OCI-LY7 (cell line): ENCODE measurements at regions of chr11 and their contacts with region 1.

Region 1: GRCh38 chr11:114262681-114263512 is 33.3 kb upstream of the NNMT start:
- DNase-seq: peak; percentile 50
- H3K4me3 ChIP-seq: no peak overlapping the region
- H3K27ac ChIP-seq: no peak overlapping the region
- H3K4me1 ChIP-seq: peaks cover 10% of the 10 kb centered on the region
- CTCF ChIP-seq: peak; percentile 75

Region 2: DNA sequence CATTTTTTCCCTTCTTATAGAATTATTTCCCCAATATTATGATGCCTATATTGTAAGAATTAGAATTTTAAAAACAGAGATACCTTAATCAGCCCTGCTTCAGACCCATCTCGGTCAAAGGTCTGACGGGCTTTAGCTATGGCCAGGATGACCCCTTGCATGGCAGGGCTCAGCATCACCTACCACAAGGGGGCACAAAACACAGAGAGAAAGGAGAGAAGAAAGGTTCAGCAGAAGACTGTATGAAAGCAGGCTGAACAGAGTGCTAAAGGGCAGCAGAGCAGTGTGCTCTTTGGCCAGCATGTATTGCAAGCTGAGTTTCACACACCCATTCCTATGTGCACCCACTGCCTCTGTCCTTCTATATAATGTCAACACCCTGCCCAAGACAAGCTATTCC is 456.5 kb before region 1 on chr11:
- CTCF ChIA-PET with region 1: no interaction called
- POLR2A ChIA-PET with region 1: no interaction called
- intact Hi-C with region 1: loop called (anchors 5 kb)
- DNase-seq: peak; percentile 46
- H3K4me3 ChIP-seq: no peak overlapping the region
- H3K27ac ChIP-seq: no peak overlapping the region
- H3K4me1 ChIP-seq: no peaks in the 10 kb centered on the region
- CTCF ChIP-seq: peak; percentile 77

Region 3: DNA sequence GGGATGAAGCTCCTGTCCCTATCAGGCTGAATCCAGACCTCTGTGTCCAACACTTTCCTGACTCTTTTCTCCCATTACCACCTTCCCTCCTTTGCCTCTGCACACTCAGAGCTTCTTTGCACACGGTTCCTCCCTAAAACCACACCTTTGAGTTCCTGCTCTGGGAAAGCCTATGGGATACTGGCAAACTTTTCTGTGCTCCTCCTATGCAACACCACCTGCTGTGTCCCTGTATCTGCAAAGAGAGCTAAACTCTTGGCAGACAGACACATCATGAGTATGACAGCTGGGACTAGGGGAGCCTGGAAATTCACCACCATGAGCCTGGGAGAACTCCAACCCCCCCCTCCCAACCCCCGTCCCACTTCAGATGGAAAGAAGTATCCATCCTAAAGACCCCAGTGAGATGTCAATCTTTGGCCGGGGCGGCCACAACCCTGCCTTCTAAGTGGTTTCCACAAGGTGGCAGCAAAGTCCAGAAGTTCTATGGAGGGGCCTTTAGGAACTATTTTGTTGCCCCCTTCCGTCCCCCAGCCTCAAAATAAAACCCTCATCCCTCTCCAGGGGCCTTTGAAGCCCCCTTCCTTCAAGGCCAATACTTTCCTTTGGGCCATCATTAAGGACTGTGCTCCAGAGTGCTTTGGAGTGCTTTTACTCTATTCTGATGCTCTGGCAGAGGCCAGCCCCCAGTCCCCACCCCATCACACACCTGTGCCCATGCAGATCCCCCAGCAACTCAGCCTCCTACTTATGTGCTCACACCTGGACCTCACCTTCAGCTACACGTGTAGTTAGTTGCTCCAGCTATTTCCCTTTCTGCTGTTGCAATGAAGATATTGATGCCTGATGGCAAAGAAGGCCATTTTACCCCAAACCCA is 268.6 kb before region 1 on chr11:
- CTCF ChIA-PET with region 1: interaction called, 4 read pairs
- POLR2A ChIA-PET with region 1: interaction called, 4 read pairs
- intact Hi-C with region 1: loop called (anchors 1 kb)
- DNase-seq: peak; percentile 36
- H3K4me3 ChIP-seq: no peak overlapping the region
- H3K27ac ChIP-seq: no peak overlapping the region
- H3K4me1 ChIP-seq: no peaks in the 10 kb centered on the region
- CTCF ChIP-seq: peak; percentile 87

Region 4: DNA sequence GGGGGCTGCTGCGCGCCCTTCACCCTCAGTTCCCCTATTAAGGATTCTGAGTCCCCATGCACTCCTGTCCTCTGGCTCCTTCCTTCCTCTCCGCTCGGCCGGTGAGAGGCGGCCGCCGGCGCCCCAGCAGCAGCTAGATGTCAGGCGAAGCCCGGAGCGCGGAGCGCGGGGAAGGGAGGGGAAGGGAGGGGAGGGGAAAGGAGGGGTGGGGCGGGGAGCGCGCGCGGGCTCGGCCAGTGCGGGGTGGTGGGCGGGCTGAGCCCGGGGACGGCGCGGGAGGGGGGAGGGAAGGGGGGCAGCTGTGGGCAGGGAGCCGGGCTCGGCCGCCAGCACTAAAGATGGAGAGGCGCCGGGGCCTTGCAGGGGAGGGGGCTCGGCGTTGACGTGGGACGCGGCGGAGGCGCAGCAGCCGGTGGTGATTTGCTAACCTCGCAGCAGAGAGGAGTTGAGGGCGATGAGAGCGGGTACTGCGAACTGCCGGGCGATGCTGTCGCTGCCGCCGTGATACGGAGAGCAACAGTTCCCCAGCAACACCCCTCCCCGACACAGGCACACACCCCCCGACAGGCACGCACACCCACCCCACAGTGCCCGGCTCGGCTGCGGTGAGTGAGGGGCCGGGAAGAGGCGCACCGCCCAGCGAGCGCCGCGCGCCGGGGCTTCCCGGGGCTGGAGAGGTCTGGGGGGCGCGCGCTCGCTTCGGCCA is 203.5 kb before region 1 on chr11 and contains the start of gene ZBTB16:
- CTCF ChIA-PET with region 1: no interaction called
- POLR2A ChIA-PET with region 1: no interaction called
- intact Hi-C with region 1: no loop called
- DNase-seq: no peak
- H3K4me3 ChIP-seq: no peak within 1 kb of the TSS
- H3K27ac ChIP-seq: no peak within 1 kb of the TSS
- H3K4me1 ChIP-seq: no peaks in the 10 kb centered on the region
- CTCF ChIP-seq: no peak
- total RNA-seq, gene ZBTB16: 0.03 TPM in 1 of 2 replicates, not detected in the other

Region 5: GRCh38 chr11:114159802-114160632 is 102.9 kb before region 1 on chr11:
- CTCF ChIA-PET with region 1: no interaction called
- POLR2A ChIA-PET with region 1: interaction called, 6 read pairs
- intact Hi-C with region 1: loop called (anchors 2 kb)
- DNase-seq: peak; percentile 98
- H3K4me3 ChIP-seq: peak overlapping the region; percentile 43
- H3K27ac ChIP-seq: peak overlapping the region; percentile 81
- H3K4me1 ChIP-seq: peaks cover 59% of the 10 kb centered on the region
- CTCF ChIP-seq: peak; percentile 48; the same call in 1 of the 2 replicates

Region 6: GRCh38 chr11:114297806-114298700 is 35.2 kb after region 1 on chr11:
- CTCF ChIA-PET with region 1: no interaction called
- POLR2A ChIA-PET with region 1: no interaction called
- intact Hi-C with region 1: no loop called
- DNase-seq: no peak
- H3K4me3 ChIP-seq: no peak overlapping the region
- H3K27ac ChIP-seq: no peak overlapping the region
- H3K4me1 ChIP-seq: no peaks in the 10 kb centered on the region
- CTCF ChIP-seq: no peak

Region 7: DNA sequence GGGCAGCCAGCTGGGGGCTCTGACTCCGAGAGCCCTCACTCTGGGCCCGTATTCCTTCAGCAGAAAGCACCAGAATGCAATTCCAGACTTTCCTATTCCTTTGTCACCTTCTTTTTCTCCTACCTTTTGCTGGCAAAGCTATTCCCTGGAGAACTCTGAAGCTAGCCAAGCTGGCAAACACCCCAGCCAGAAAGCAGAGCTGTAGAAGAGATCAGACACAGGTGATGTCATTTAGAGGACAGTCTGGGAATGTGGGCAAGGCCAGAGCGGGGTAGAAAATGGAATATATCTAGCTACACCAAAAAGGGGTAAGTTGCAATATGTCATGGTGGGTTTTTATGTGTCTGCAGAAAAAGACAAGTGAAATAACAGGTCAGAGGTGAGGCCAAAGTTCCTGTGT is 620.6 kb after region 1 on chr11:
- CTCF ChIA-PET with region 1: no interaction called
- POLR2A ChIA-PET with region 1: no interaction called
- intact Hi-C with region 1: no loop called
- DNase-seq: no peak
- H3K4me3 ChIP-seq: no peak overlapping the region
- H3K27ac ChIP-seq: no peak overlapping the region
- H3K4me1 ChIP-seq: no peaks in the 10 kb centered on the region
- CTCF ChIP-seq: no peak